ENCODE measurements at regions of chr3 and their contacts with region 1.

Region 1: GRCh38 chr3:48685602-48686511 is at the start of gene NCKIPSD:
- DNase-seq: peak; percentile 97
- CTCF ChIP-seq: peak; percentile 94

Region 2: DNA sequence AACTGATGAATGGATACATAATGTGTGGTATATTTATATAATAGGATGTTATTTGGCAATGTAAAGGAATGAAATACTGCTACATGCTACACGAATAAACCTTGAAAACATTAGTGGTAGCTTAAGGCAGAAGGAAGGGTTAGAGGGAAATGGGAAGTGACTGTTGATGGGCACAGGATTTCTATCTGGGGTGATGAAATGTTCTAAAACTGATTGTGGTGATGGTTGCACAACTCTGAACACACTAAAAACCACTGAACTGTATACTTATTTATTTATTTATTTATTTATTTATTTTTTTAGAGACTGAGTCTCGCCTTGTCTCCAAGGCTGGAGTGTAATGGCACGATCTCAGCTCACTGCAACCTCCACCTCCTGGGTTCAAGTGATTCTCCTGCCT is 157.1 kb before region 1 on chr3:
- CTCF ChIA-PET with region 1: no interaction called
- POLR2A ChIA-PET with region 1: no interaction called
- DNase-seq: no peak
- CTCF ChIP-seq: no peak

Region 3: GRCh38 chr3:48663415-48664312 is 22.2 kb before region 1 on chr3:
- CTCF ChIA-PET with region 1: interaction called, 19 read pairs
- POLR2A ChIA-PET with region 1: no interaction called
- DNase-seq: peak; percentile 100
- CTCF ChIP-seq: peak; percentile 86

Region 4: GRCh38 chr3:48674505-48674904 is 11.4 kb before region 1 on chr3:
- CTCF ChIA-PET with region 1: interaction called, 14 read pairs
- POLR2A ChIA-PET with region 1: no interaction called
- DNase-seq: no peak
- CTCF ChIP-seq: no peak

Region 5: DNA sequence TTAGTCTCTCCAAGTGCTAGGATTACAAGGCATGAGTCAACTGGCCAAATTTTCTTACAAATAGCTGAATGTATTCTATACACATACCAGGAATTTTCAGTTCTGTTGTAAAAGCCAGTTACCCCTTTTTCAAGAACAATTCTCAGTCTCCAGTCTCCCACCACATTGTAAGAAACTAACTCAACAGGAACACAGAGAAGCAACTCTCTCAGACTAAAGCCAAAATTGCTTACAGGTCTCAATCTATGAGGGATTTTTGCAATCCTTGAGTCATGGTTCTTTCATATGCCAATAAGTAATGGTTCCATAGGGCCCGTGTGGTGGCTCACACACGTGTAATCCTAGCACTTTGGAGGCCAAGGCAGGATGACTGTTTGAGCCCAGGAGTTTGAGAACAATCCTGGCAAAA is 22.6 kb after region 1 on chr3:
- CTCF ChIA-PET with region 1: interaction called, 29 read pairs
- POLR2A ChIA-PET with region 1: no interaction called
- DNase-seq: no peak
- CTCF ChIP-seq: no peak